Activated CD4-positive, alpha-beta memory T cell treated with anti-CD3 and anti-CD28 coated beads for 36 hours (primary cell): ENCODE measurements at regions of chr7 and their contacts with region 1.

Region 1: GRCh38 chr7:149209518-149210269 is 14.3 kb downstream of the ZNF282 start:
- DNase-seq: peak; percentile 97
- H3K4me3 Mint-ChIP-seq: peak overlapping the region; percentile 56
- H3K27ac Mint-ChIP-seq: peak overlapping the region; percentile 98
- H3K4me1 Mint-ChIP-seq: peaks cover 40% of the 10 kb centered on the region
- H3K27me3 Mint-ChIP-seq: no peaks in the 10 kb centered on the region

Region 2: DNA sequence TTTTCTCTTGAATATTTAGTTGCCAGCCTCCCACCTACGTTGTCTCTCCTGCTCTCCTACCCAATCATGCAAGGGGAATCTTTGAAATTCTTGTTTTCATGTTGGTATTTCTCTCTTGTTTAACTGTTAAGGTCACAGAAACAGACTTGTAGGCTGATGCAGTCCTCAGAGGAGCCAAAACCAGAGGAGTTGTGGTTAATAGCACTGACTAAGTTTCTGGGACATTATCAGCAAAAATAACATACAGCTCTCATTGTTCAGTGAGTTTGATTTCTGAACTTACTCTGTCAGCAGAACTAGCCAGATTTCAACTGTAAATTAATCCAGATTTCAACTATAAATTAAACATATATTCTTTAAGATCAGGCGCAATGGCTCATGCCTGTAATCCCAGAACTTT is 522.1 kb before region 1 on chr7:
- CTCF ChIA-PET with region 1: no interaction called
- POLR2A ChIA-PET with region 1: no interaction called
- intact Hi-C with region 1: no loop called
- DNase-seq: no peak
- H3K4me3 Mint-ChIP-seq: no peak overlapping the region
- H3K27ac Mint-ChIP-seq: no peak overlapping the region
- H3K4me1 Mint-ChIP-seq: peaks cover 6% of the 10 kb centered on the region
- H3K27me3 Mint-ChIP-seq: no peaks in the 10 kb centered on the region

Region 3: GRCh38 chr7:148914208-148914777 is 295.4 kb before region 1 on chr7:
- CTCF ChIA-PET with region 1: no interaction called
- POLR2A ChIA-PET with region 1: no interaction called
- intact Hi-C with region 1: loop called (anchors 1 kb)
- DNase-seq: peak; percentile 87
- H3K4me3 Mint-ChIP-seq: peak overlapping the region; percentile 62
- H3K27ac Mint-ChIP-seq: peak overlapping the region; percentile 93
- H3K4me1 Mint-ChIP-seq: peaks cover 66% of the 10 kb centered on the region
- H3K27me3 Mint-ChIP-seq: no peaks in the 10 kb centered on the region

Region 4: DNA sequence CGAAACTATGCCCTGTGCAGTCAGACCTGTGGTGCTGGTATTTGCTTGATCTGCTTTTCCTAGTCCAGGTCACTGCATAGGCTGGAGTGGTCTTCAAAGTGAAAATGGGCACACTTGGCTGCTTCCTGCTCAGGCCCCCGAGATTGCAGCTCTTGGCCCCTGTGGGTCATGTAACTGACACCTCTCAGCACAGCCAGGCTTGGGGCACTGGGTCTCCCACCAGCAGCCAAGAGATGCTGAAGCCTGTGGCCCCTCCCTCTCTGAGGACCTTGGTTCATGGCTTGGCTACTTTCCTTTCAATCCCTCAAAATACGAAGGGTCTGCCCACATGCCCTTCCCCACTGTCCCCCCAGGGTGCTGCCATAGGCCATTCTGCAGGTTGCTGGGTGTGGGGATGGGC is 215.1 kb before region 1 on chr7:
- CTCF ChIA-PET with region 1: no interaction called
- POLR2A ChIA-PET with region 1: no interaction called
- intact Hi-C with region 1: no loop called
- DNase-seq: no peak
- H3K4me3 Mint-ChIP-seq: no peak overlapping the region
- H3K27ac Mint-ChIP-seq: no peak overlapping the region
- H3K4me1 Mint-ChIP-seq: no peaks in the 10 kb centered on the region
- H3K27me3 Mint-ChIP-seq: no peaks in the 10 kb centered on the region

Region 5: GRCh38 chr7:149125863-149126661 is 83.6 kb before region 1 on chr7 and contains the start of gene ZNF425:
- CTCF ChIA-PET with region 1: no interaction called
- POLR2A ChIA-PET with region 1: interaction called, 7 read pairs
- intact Hi-C with region 1: loop called (anchors 1 kb)
- DNase-seq: peak; percentile 95
- H3K4me3 Mint-ChIP-seq: peak within 1 kb of the TSS; percentile 98
- H3K27ac Mint-ChIP-seq: peak within 1 kb of the TSS; percentile 98
- H3K4me1 Mint-ChIP-seq: peaks cover 18% of the 10 kb centered on the region
- H3K27me3 Mint-ChIP-seq: no peaks in the 10 kb centered on the region
- total RNA-seq, gene ZNF425: 0.74 to 0.75 TPM

Region 6: DNA sequence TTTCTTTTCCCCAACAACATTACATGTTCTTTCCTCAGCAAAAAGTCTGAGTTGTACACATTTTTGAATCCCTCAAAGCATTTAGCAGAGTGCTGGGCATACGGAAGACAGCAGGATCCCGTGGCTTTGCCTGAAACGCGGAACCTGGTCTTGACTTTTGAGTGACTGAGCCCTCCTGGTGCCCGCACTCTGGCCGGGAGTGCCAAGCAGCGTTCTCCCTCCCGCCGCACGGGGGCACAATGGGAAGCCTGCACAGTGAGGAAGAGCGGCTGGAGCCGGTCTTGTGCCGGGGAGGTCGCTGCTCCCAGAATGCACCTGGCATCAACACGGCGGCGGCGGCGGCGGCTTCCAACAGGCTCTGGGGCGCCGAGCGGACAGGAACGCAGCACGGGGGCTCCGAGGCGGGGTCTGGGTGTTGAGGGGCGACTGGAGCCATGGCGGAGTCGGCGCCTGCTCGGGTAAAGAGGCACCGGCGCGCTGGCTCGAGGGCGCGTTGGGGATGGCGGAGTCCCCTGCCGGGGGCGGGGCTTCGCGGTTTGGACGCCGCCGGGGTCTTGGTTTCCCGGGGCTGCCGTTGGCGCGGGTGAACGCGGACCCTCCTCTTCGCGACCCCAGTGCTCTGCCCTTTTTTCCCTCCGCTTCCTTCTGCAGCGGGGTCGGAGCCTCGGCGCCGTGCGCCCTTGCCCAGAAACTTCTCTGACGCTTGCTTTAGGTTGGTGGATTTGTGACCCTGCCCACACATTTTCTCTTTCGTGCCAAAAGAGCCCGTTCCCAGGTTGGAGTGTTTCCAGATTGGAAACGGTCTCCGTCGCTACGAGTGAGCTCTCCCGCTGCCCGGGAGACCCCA is 29.9 kb after region 1 on chr7 and contains the start of gene ZNF212:
- CTCF ChIA-PET with region 1: interaction called, 4 read pairs
- POLR2A ChIA-PET with region 1: interaction called, 5 read pairs
- intact Hi-C with region 1: loop called (anchors 1 kb)
- DNase-seq: peak; percentile 94
- H3K4me3 Mint-ChIP-seq: peak within 1 kb of the TSS; percentile 94
- H3K27ac Mint-ChIP-seq: peak within 1 kb of the TSS; percentile 90
- H3K4me1 Mint-ChIP-seq: peaks cover 42% of the 10 kb centered on the region
- H3K27me3 Mint-ChIP-seq: peaks cover 6% of the 10 kb centered on the region
- total RNA-seq, gene ZNF212: 21.5 to 21.9 TPM

Region 7: GRCh38 chr7:149261829-149262617 is 52.3 kb after region 1 on chr7 and contains the start of gene ZNF783:
- CTCF ChIA-PET with region 1: interaction called, 6 read pairs
- POLR2A ChIA-PET with region 1: interaction called, 13 read pairs
- intact Hi-C with region 1: loop called (anchors 1 kb)
- DNase-seq: peak; percentile 88
- H3K4me3 Mint-ChIP-seq: peak within 1 kb of the TSS; percentile 78
- H3K27ac Mint-ChIP-seq: peak within 1 kb of the TSS; percentile 94
- H3K4me1 Mint-ChIP-seq: peaks cover 49% of the 10 kb centered on the region
- H3K27me3 Mint-ChIP-seq: no peaks in the 10 kb centered on the region
- total RNA-seq, gene ZNF783: 15.5 to 17.1 TPM

Region 8: GRCh38 chr7:149297034-149297755 is 87.5 kb after region 1 on chr7:
- CTCF ChIA-PET with region 1: no interaction called
- POLR2A ChIA-PET with region 1: no interaction called
- intact Hi-C with region 1: loop called (anchors 1 kb)
- DNase-seq: peak; percentile 38
- H3K4me3 Mint-ChIP-seq: no peak overlapping the region
- H3K27ac Mint-ChIP-seq: peak overlapping the region; percentile 92
- H3K4me1 Mint-ChIP-seq: peaks cover 16% of the 10 kb centered on the region
- H3K27me3 Mint-ChIP-seq: no peaks in the 10 kb centered on the region

Region 9: GRCh38 chr7:149624419-149625339 is 415.0 kb after region 1 on chr7:
- CTCF ChIA-PET with region 1: no interaction called
- POLR2A ChIA-PET with region 1: no interaction called
- intact Hi-C with region 1: loop called (anchors 1 kb)
- DNase-seq: peak; percentile 94
- H3K4me3 Mint-ChIP-seq: peak overlapping the region; percentile 83
- H3K27ac Mint-ChIP-seq: peak overlapping the region; percentile 79
- H3K4me1 Mint-ChIP-seq: peaks cover 46% of the 10 kb centered on the region
- H3K27me3 Mint-ChIP-seq: peaks cover 5% of the 10 kb centered on the region